Naive thymus-derived CD4-positive, alpha-beta T cell (primary cell): ENCODE measurements at regions of chr19 and their contacts with region 1.

Region 1: GRCh38 chr19:52248241-52248640 is 21.1 kb upstream of the ZNF766 start:
- DNase-seq: peak; percentile 25 to 62 (median 54)
- ATAC-seq: peak; percentile 78
- H3K4me3 ChIP-seq: no peak overlapping the region
- H3K4me3 Mint-ChIP-seq: no peak overlapping the region
- H3K27ac ChIP-seq: no peak overlapping the region
- H3K27ac Mint-ChIP-seq: no peak overlapping the region
- H3K4me1 ChIP-seq: no peaks in the 10 kb centered on the region
- H3K4me1 Mint-ChIP-seq: peaks cover 0 to 3% (median 0%) of the 10 kb centered on the region in 7 donors
- H3K27me3 ChIP-seq: no peaks in the 10 kb centered on the region
- H3K27me3 Mint-ChIP-seq: no peaks in the 10 kb centered on the region

Region 2: DNA sequence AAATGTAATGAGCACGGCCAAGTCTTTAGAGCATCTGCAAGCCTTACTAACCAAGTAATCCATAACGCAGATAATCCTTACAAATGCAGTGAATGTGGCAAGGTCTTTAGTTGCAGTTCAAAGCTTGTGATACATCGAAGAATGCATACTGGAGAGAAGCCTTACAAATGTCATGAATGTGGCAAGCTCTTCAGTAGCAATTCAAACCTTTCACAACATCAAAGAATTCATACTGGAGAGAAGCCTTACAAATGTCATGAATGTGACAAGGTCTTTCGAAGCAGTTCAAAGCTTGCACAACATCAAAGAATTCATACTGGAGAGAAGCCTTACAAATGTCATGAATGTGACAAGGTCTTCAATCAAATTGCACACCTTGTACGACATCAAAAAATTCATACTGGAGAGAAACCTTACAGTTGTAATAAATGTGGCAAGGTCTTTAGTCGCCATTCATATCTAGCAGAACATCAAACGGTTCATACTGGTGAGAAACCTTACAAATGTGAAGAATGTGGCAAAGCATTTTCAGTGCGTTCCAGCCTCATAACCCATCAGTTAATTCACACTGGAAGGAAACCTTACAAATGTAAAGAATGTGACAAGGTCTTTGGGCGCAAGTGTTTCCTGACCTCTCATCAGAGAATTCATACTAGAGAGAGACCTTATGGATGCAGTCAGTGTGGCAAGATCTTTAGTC is 167.3 kb after region 1 on chr19:
- CTCF ChIA-PET with region 1: no interaction called
- POLR2A ChIA-PET with region 1: no interaction called
- intact Hi-C with region 1: no loop called
- DNase-seq: no peak
- ATAC-seq: no peak
- H3K4me3 ChIP-seq: no peak overlapping the region
- H3K4me3 Mint-ChIP-seq: no peak overlapping the region
- H3K27ac ChIP-seq: no peak overlapping the region
- H3K27ac Mint-ChIP-seq: no peak overlapping the region
- H3K4me1 ChIP-seq: no peaks in the 10 kb centered on the region
- H3K4me1 Mint-ChIP-seq: no peaks in the 10 kb centered on the region
- H3K27me3 ChIP-seq: no peaks in the 10 kb centered on the region
- H3K27me3 Mint-ChIP-seq: no peaks in the 10 kb centered on the region

Region 3: DNA sequence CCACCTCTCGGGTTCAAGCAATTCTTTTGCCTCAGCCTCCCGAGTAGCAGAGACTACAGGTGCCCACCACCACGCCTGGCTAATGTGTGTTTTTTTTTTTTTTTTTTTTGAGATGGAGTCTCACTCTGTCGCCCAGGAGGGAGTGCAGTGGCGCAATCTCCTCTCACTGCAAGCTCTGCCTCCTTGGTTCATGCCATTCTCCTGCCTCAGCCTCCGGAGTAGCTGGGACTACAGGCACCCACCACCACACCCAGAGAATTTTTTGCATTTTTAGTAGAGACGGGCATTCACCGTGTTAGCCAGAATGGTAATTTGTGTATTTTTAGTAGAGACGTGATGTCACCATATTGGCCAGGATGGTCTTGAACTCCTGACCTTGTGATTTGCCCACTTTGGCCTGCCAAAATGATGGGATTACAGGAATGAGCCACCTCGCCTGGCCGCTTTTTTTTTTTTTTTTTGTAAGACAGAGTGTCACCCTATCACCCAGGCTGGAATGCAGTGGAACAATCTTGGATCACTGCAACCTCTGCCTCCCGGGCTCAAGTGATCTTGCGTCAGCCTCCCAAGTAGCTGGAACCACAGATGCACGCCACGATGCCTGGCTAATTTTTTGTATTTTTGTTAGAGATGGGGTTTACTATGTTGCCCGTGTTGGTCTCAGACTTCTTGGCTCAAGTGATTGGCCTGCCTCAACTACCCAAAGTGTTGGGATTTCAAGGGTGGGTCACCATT is 250.2 kb after region 1 on chr19:
- CTCF ChIA-PET with region 1: no interaction called
- POLR2A ChIA-PET with region 1: no interaction called
- intact Hi-C with region 1: no loop called
- DNase-seq: no peak
- ATAC-seq: no peak
- H3K4me3 ChIP-seq: no peak overlapping the region
- H3K4me3 Mint-ChIP-seq: no peak overlapping the region
- H3K27ac ChIP-seq: no peak overlapping the region
- H3K27ac Mint-ChIP-seq: no peak overlapping the region
- H3K4me1 ChIP-seq: no peaks in the 10 kb centered on the region
- H3K4me1 Mint-ChIP-seq: no peaks in the 10 kb centered on the region
- H3K27me3 ChIP-seq: no peaks in the 10 kb centered on the region
- H3K27me3 Mint-ChIP-seq: peaks cover 0 to 8% (median 4%) of the 10 kb centered on the region in 5 donors

Region 4: GRCh38 chr19:52748336-52748950 is 500.2 kb after region 1 on chr19:
- CTCF ChIA-PET with region 1: interaction called, 10 read pairs
- POLR2A ChIA-PET with region 1: no interaction called
- intact Hi-C with region 1: no loop called
- DNase-seq: peak in 7 of 9 donors; percentile 18 to 43 (median 35)
- ATAC-seq: no peak
- H3K4me3 ChIP-seq: no peak overlapping the region
- H3K4me3 Mint-ChIP-seq: no peak overlapping the region
- H3K27ac ChIP-seq: no peak overlapping the region
- H3K27ac Mint-ChIP-seq: no peak overlapping the region
- H3K4me1 ChIP-seq: no peaks in the 10 kb centered on the region
- H3K4me1 Mint-ChIP-seq: peaks cover 0 to 13% (median 6%) of the 10 kb centered on the region in 7 donors
- H3K27me3 ChIP-seq: no peaks in the 10 kb centered on the region
- H3K27me3 Mint-ChIP-seq: no peaks in the 10 kb centered on the region